ENCODE measurements at regions of chr19 and their contacts with region 1.

Region 1: GRCh38 chr19:32971715-32972540 is at the starts of genes CEP89 and FAAP24:
- DNase-seq: peak; percentile 99
- ATAC-seq: peak; percentile 99
- H3K4me3 ChIP-seq: peak within 1 kb of the TSS; percentile 75
- H3K27ac ChIP-seq: peak within 1 kb of the TSS; percentile 75
- H3K4me1 ChIP-seq: no peaks in the 10 kb centered on the region
- H3K27me3 ChIP-seq: no peaks in the 10 kb centered on the region
- CTCF ChIP-seq: no peak
- POLR2A ChIP-seq: peak; percentile 47; the same call in 1 of the 2 replicates
- RAD21 ChIP-seq: no peak
- total RNA-seq, gene CEP89: 5.8 and 7.2 TPM in 2 replicates
- total RNA-seq, gene FAAP24: 2.2 TPM in 2 replicates

Region 2: GRCh38 chr19:32691291-32691951 is 280.5 kb before region 1 on chr19 and contains the start of gene NUDT19:
- CTCF ChIA-PET with region 1: no interaction called
- POLR2A ChIA-PET with region 1: no interaction called
- dilution Hi-C with region 1: no loop called
- in situ Hi-C with region 1: no loop called
- intact Hi-C with region 1: loop called (anchors 5 kb)
- DNase-seq: peak; percentile 73
- ATAC-seq: peak; percentile 95
- H3K4me3 ChIP-seq: peak within 1 kb of the TSS; percentile 65
- H3K27ac ChIP-seq: peak within 1 kb of the TSS; percentile 80
- H3K4me1 ChIP-seq: peaks cover 9% of the 10 kb centered on the region
- H3K27me3 ChIP-seq: no peaks in the 10 kb centered on the region
- CTCF ChIP-seq: no peak
- POLR2A ChIP-seq: peak; percentile 53; the same call in 1 of the 2 replicates
- RAD21 ChIP-seq: no peak
- total RNA-seq, gene NUDT19: 4.5 and 6.4 TPM in 2 replicates

Region 3: DNA sequence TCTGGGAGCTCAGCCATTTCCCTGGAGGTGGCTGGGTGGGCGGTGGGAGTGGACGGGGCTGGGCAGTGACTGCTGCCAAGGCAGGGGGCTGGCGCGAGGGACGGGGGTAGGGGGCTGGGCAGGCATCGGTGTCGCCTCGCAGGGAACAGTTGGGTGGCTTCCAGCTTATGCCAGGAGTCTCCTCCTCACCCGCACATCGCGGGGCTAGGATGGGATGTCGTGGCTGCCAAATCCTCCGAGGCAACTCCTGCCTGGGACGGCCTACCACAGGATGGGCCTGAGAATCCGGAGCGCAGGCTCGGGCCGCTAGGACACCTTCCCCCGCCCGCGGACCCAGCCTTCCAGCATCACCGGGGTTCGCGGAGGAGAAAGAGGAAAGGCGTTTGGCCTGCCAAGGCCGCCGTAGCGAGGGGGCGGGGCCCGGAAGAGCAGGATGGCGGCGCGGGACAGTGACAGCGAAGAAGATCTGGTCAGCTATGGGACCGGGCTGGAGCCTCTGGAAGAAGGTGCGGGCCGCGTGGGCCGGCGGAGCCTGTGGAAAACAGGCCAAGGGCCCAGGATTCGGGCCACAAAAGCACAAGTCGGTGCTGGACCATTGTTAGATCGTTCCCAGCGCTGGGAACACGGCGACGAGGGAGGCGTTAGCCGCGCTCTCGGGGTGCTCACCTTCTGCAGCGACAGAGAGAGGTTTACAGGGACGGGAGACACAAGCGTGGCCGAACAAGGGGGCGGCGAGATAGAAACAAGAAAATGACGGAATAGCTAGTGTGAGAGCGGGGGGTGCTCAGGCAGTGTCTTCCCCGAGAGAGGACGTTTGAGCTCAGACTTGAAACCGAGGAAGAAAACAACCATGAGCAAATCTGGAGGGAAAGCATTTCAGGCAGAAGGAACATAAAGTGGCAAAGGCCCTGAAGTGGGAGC is 109.1 kb after region 1 on chr19 and contains the start of gene GPATCH1:
- CTCF ChIA-PET with region 1: interaction called, 3 read pairs
- POLR2A ChIA-PET with region 1: no interaction called
- dilution Hi-C with region 1: no loop called
- in situ Hi-C with region 1: no loop called
- intact Hi-C with region 1: loop called (anchors 2 kb)
- DNase-seq: peak; percentile 73
- ATAC-seq: peak; percentile 89
- H3K4me3 ChIP-seq: peak within 1 kb of the TSS; percentile 93
- H3K27ac ChIP-seq: peak within 1 kb of the TSS; percentile 90
- H3K4me1 ChIP-seq: peaks cover 3% of the 10 kb centered on the region; the same call in 1 of the 2 replicates
- H3K27me3 ChIP-seq: no peaks in the 10 kb centered on the region
- CTCF ChIP-seq: no peak
- POLR2A ChIP-seq: no peak
- RAD21 ChIP-seq: no peak
- total RNA-seq, gene GPATCH1: 7.5 and 8.3 TPM in 2 replicates

Region 4: DNA sequence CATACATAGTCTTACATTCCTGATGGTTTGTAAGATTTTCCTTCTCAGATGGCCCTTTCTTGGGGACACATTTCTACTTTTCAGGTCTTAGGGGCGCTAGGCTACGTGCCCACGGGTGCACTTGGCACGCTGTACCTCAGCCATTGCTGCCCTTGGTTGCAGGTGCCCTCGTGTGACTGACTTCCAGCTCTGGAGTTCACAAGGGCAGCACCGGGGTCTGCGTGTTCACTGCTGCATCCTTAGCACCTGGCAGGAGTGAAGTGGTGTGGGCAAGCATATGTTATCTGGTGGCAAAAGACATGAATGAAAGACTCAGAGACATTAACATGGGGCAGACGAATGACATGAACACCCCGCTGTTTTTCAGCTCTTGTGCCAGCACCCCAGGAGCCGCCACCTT is 146.7 kb after region 1 on chr19:
- CTCF ChIA-PET with region 1: interaction called, 8 read pairs
- POLR2A ChIA-PET with region 1: no interaction called
- dilution Hi-C with region 1: no loop called
- in situ Hi-C with region 1: loop called (anchors 5 kb)
- intact Hi-C with region 1: loop called (anchors 1 kb)
- DNase-seq: no peak
- ATAC-seq: no peak
- H3K4me3 ChIP-seq: no peak overlapping the region
- H3K27ac ChIP-seq: no peak overlapping the region
- H3K4me1 ChIP-seq: no peaks in the 10 kb centered on the region
- H3K27me3 ChIP-seq: no peaks in the 10 kb centered on the region
- CTCF ChIP-seq: no peak
- POLR2A ChIP-seq: no peak
- RAD21 ChIP-seq: no peak

Region 5: DNA sequence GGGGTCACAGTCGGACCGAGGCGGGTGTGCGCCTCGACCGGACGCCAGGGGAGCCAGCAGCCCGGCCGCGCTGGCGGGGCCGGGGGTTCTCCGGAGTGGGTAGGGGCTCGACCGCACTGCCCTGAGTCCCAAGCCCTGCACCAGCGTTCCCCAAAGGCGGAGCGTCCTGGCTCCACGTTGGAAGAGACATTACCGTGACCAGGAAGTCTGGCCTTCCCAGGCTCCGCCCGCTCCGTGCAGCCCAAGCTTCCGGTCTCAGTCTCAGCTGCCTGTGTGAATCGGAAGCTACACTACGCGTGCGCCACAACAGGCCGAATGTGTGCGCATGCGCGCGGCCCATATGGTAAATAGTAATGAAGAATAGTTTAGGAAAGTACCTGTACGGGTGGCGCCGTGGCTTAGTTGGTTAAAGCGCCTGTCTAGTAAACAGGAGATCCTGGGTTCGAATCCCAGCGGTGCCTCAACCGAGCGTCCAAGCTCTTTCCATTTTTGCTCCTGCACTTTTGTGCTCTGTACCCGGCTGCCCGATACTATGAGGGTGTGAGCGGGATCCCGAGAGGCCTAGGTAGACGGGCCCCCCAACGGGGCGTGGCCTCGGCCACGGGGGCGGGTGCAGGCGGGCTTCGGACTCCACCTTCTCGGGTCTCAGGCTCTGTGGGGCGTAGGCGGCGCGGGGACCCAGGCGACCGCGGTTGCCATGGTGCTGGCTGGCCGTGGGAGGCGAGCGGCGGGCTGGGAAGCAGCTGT is 204.9 kb after region 1 on chr19:
- CTCF ChIA-PET with region 1: no interaction called
- POLR2A ChIA-PET with region 1: no interaction called
- dilution Hi-C with region 1: no loop called
- in situ Hi-C with region 1: no loop called
- intact Hi-C with region 1: loop called (anchors 5 kb)
- DNase-seq: peak; percentile 99
- ATAC-seq: peak; percentile 96
- H3K4me3 ChIP-seq: peak overlapping the region; percentile 60
- H3K27ac ChIP-seq: peak overlapping the region; percentile 69
- H3K4me1 ChIP-seq: peaks cover 10% of the 10 kb centered on the region
- H3K27me3 ChIP-seq: no peaks in the 10 kb centered on the region
- CTCF ChIP-seq: no peak; the same call in 1 of the 2 replicates
- POLR2A ChIP-seq: peak; percentile 80
- RAD21 ChIP-seq: no peak

Region 6: DNA sequence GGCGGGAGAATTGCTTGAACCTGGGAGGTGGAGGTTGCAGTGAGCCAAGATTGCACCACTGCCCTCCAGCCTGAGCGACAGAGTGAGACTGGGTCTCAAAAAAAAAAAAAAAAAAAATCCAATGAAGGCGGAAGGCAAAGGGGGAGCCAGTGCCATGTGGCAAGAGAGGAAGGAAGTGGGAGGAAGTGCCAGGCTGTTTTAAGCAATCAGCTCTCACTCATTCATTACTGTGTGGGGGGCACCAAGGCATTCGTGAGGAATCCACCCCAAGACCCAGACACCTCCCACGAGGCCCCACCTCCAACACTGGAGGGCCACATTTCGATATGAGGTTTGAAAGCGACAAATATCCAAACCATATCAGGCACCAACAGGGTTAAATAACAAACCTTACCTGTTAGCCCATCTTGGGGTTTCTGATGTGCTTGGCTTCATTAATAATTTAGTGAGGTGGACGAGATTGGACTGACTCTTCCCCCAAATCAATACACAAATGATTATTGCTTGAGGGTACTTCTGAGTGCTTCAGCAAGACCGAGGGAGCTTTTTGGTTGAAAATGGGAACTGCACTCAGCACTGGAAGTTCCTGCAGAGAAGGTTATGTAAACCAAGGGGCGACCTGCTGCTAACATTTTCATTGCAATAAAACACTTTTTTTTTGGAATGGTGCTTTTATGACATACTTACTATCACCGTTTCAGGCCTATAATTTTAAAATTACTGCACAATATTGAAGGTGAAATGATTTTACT is 214.7 kb after region 1 on chr19:
- CTCF ChIA-PET with region 1: interaction called, 3 read pairs
- POLR2A ChIA-PET with region 1: no interaction called
- dilution Hi-C with region 1: no loop called
- in situ Hi-C with region 1: no loop called
- intact Hi-C with region 1: loop called (anchors 1 kb)
- DNase-seq: no peak
- ATAC-seq: no peak
- H3K4me3 ChIP-seq: no peak overlapping the region
- H3K27ac ChIP-seq: no peak overlapping the region
- H3K4me1 ChIP-seq: no peaks in the 10 kb centered on the region
- H3K27me3 ChIP-seq: peaks cover 5% of the 10 kb centered on the region; the same call in 1 of the 2 replicates
- CTCF ChIP-seq: no peak
- POLR2A ChIP-seq: no peak
- RAD21 ChIP-seq: no peak

Region 7: GRCh38 chr19:33382006-33382405 is 410.1 kb after region 1 on chr19:
- CTCF ChIA-PET with region 1: no interaction called
- POLR2A ChIA-PET with region 1: interaction called, 12 read pairs
- dilution Hi-C with region 1: no loop called
- in situ Hi-C with region 1: no loop called
- intact Hi-C with region 1: no loop called
- DNase-seq: no peak
- ATAC-seq: no peak
- H3K4me3 ChIP-seq: no peak overlapping the region
- H3K27ac ChIP-seq: no peak overlapping the region
- H3K4me1 ChIP-seq: peaks cover under 1% of the 10 kb centered on the region
- H3K27me3 ChIP-seq: no peaks in the 10 kb centered on the region
- CTCF ChIP-seq: no peak
- POLR2A ChIP-seq: no peak
- RAD21 ChIP-seq: no peak